GM12878 (cell line): ENCODE measurements at regions of chr14 and their contacts with region 1.

Region 1: GRCh38 chr14:69708586-69709174 is 58.3 kb upstream of the SRSF5 start:
- DNase-seq: no peak
- ATAC-seq: peak; percentile 89
- H3K4me3 ChIP-seq: no peak overlapping the region
- H3K27ac ChIP-seq: no peak overlapping the region
- H3K4me1 ChIP-seq: peaks cover 9% of the 10 kb centered on the region
- H3K27me3 ChIP-seq: no peaks in the 10 kb centered on the region
- CTCF ChIP-seq: peak; percentile 20 to 44 (median 30); a peak in 3 of 6 replicates
- EP300 ChIP-seq: no peak
- POLR2A ChIP-seq: no peak
- RAD21 ChIP-seq: peak; percentile 41; the same call in 1 of the 2 replicates

Region 2: DNA sequence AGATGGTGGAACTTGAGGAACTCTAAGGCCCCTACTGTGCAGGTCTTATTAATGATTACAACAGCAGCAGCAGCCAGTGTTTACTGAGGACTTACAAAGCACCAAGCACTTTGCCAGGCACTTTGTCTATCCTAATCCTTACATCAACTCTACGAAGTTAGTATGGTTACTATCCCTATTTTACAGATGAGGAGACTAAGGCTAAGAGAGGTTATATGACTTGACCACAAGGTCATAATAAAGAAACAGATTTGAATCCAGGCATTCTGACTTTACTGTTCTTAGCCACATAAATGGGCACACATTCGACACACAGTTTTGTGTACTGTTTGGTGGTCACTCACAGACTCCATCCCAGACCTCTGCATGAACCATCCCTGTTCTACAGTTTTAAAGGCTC is 52.1 kb before region 1 on chr14:
- CTCF ChIA-PET with region 1: no interaction called
- POLR2A ChIA-PET with region 1: no interaction called
- RAD21 ChIA-PET with region 1: no interaction called
- SMC1A ChIA-PET with region 1: no interaction called
- in situ Hi-C with region 1: no loop called
- intact Hi-C with region 1: no loop called
- DNase-seq: no peak
- ATAC-seq: no peak
- H3K4me3 ChIP-seq: no peak overlapping the region
- H3K27ac ChIP-seq: no peak overlapping the region
- H3K4me1 ChIP-seq: peaks cover 33% of the 10 kb centered on the region
- H3K27me3 ChIP-seq: no peaks in the 10 kb centered on the region
- CTCF ChIP-seq: no peak
- EP300 ChIP-seq: no peak
- POLR2A ChIP-seq: no peak
- RAD21 ChIP-seq: no peak

Region 3: DNA sequence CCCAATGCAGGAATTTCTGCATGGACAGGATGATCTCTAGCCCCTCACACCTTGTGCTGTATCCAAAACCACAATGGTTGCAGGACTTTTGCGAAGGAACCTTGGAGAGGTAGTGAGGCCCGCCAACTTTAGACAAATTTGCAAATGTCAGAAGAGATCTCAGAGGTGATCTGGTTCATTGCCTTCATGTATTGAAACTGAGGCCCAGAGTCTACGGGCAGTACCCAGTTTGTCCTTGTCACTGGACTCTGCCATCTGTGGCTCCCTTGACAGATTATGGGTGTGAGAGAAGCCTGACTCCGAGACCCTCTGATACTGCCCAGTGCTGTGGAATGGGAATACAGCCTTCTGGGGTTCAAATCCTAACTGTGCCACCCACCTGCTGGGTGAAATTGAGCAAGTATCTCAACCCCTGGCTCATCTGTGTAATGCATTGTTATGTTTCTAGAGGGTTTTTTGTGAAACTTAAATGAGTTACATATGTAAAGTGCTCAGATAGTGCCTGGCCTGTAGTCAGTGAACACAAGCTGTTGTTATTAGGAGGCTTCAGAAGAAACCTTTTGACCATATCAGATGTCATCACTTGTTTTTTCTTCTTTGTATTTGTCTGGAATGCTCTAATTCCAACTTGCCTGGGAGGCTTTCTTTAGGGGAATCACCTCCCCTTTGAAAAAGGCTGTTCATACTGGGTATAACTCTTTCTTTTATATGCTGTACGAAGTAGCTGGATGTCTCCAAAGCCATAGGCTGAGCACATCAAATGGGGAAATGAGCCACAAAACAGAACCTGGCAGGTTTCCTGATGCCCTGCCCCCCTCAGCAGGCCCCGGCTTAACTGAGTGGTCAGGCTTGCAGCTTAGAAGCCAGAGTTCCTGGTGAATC is 13.1 kb before region 1 on chr14:
- CTCF ChIA-PET with region 1: interaction called, 7 read pairs
- POLR2A ChIA-PET with region 1: interaction called, 10 read pairs
- RAD21 ChIA-PET with region 1: no interaction called
- SMC1A ChIA-PET with region 1: interaction called, 5 read pairs
- in situ Hi-C with region 1: no loop called
- intact Hi-C with region 1: no loop called
- DNase-seq: no peak
- ATAC-seq: peak; percentile 45
- H3K4me3 ChIP-seq: peak overlapping the region; percentile 36; the same call in 1 of the 2 replicates
- H3K27ac ChIP-seq: peak overlapping the region; percentile 86
- H3K4me1 ChIP-seq: peaks cover 76% of the 10 kb centered on the region
- H3K27me3 ChIP-seq: no peaks in the 10 kb centered on the region
- CTCF ChIP-seq: no peak
- EP300 ChIP-seq: no peak
- POLR2A ChIP-seq: no peak
- RAD21 ChIP-seq: no peak